Heart right ventricle (tissue), 16 donors: ENCODE measurements at regions of chr2 and their contacts with region 1.

Region 1: GRCh38 chr2:48369971-48370370 is 160.0 kb upstream of the STON1 start:
- DNase-seq: no peak
- ATAC-seq: no peak
- H3K4me3 ChIP-seq: no peak overlapping the region
- H3K27ac ChIP-seq: no peak overlapping the region
- H3K4me1 ChIP-seq: no peaks in the 10 kb centered on the region
- H3K27me3 ChIP-seq: no peaks in the 10 kb centered on the region
- CTCF ChIP-seq: no peak

Region 2: GRCh38 chr2:48383046-48383445 is 13.1 kb after region 1 on chr2:
- intact Hi-C with region 1: loop called in 1 of 10 experiments (anchors 2 kb)
- DNase-seq: no peak
- ATAC-seq: no peak
- H3K4me3 ChIP-seq: no peak overlapping the region
- H3K27ac ChIP-seq: no peak overlapping the region
- H3K4me1 ChIP-seq: peaks cover 0 to 14% (median 7%) of the 10 kb centered on the region in 9 donors
- H3K27me3 ChIP-seq: no peaks in the 10 kb centered on the region
- CTCF ChIP-seq: no peak